Naive thymus-derived CD4-positive, alpha-beta T cell (primary cell): ENCODE measurements at regions of chr2 and their contacts with region 1.

Region 1: DNA sequence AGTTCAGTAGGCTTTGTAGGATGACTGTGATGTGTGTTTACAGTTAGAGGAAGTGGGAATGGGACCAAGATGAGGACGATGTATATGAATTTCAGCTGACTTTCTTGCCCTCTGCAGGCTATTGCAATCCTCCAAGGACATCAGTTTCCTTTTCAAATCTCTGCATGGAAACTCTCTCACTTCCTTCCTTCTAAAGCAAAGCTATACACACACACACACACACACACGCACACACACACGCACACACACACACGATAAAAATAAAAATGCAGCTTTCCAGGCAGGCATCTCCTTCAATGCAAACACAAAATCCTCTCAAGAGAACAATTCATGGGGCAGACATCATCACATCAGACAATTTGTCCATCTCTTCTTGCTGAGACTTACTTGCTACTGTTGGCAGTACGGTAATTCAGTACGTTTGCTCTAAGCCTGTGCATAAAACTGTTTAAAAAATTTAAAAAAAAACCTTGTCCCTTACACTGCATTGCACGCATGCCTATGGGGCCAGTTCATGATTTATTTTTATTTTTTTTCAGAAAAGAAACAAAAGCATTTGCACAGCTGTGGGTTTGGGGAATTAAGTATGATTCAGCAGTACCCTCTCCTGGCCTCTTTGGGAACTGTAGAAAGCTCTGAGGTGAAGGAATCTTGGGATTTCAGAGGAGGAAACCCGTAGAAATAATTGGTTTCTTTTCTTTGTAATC is 27.1 kb upstream of the ICOS start:
- DNase-seq: peak in 6 of 9 donors; percentile 42 to 61 (median 53)
- ATAC-seq: peak; percentile 82
- H3K4me3 ChIP-seq: no peak overlapping the region
- H3K4me3 Mint-ChIP-seq: peak overlapping the region in 8 of 10 donors; percentile 26 to 81 (median 64)
- H3K27ac ChIP-seq: no peak overlapping the region
- H3K27ac Mint-ChIP-seq: peak overlapping the region in 6 of 9 donors; percentile 8 to 71 (median 42)
- H3K4me1 ChIP-seq: peaks cover 0 to 7% of the 10 kb centered on the region in 2 donors
- H3K4me1 Mint-ChIP-seq: peaks cover 4 to 25% (median 8%) of the 10 kb centered on the region in 7 donors
- H3K27me3 ChIP-seq: no peaks in the 10 kb centered on the region
- H3K27me3 Mint-ChIP-seq: peaks cover 0 to 10% (median 0%) of the 10 kb centered on the region in 5 donors

Region 2: GRCh38 chr2:203225423-203226039 is 683.9 kb before region 1 on chr2:
- CTCF ChIA-PET with region 1: no interaction called
- POLR2A ChIA-PET with region 1: no interaction called
- intact Hi-C with region 1: loop called (anchors 1 to 10 kb)
- DNase-seq: peak in 6 of 9 donors; percentile 2 to 41 (median 36)
- ATAC-seq: peak; percentile 85
- H3K4me3 ChIP-seq: no peak overlapping the region
- H3K4me3 Mint-ChIP-seq: no peak overlapping the region
- H3K27ac ChIP-seq: no peak overlapping the region
- H3K27ac Mint-ChIP-seq: no peak overlapping the region
- H3K4me1 ChIP-seq: no peaks in the 10 kb centered on the region
- H3K4me1 Mint-ChIP-seq: no peaks in the 10 kb centered on the region
- H3K27me3 ChIP-seq: no peaks in the 10 kb centered on the region
- H3K27me3 Mint-ChIP-seq: no peaks in the 10 kb centered on the region

Region 3: GRCh38 chr2:203656522-203657287 is 252.7 kb before region 1 on chr2:
- CTCF ChIA-PET with region 1: no interaction called
- POLR2A ChIA-PET with region 1: no interaction called
- intact Hi-C with region 1: loop called in 1 of 2 experiments (anchors 5 kb)
- DNase-seq: peak in 4 of 9 donors; percentile 14 to 20 (median 16)
- ATAC-seq: peak; percentile 88
- H3K4me3 ChIP-seq: no peak overlapping the region
- H3K4me3 Mint-ChIP-seq: peak overlapping the region in 7 of 10 donors; percentile 5 to 76 (median 32)
- H3K27ac ChIP-seq: no peak overlapping the region
- H3K27ac Mint-ChIP-seq: peak overlapping the region in 7 of 9 donors; percentile 21 to 84 (median 63)
- H3K4me1 ChIP-seq: peaks cover 0 to 6% of the 10 kb centered on the region in 2 donors
- H3K4me1 Mint-ChIP-seq: peaks cover 30 to 52% (median 41%) of the 10 kb centered on the region in 7 donors
- H3K27me3 ChIP-seq: no peaks in the 10 kb centered on the region
- H3K27me3 Mint-ChIP-seq: no peaks in the 10 kb centered on the region

Region 4: GRCh38 chr2:203840655-203841205 is 68.7 kb before region 1 on chr2:
- CTCF ChIA-PET with region 1: no interaction called
- POLR2A ChIA-PET with region 1: no interaction called
- intact Hi-C with region 1: no loop called
- DNase-seq: no peak
- ATAC-seq: no peak
- H3K4me3 ChIP-seq: no peak overlapping the region
- H3K4me3 Mint-ChIP-seq: no peak overlapping the region
- H3K27ac ChIP-seq: no peak overlapping the region
- H3K27ac Mint-ChIP-seq: peak overlapping the region in 1 of 9 donors; percentile 63
- H3K4me1 ChIP-seq: no peaks in the 10 kb centered on the region
- H3K4me1 Mint-ChIP-seq: peaks cover 0 to 19% (median 0%) of the 10 kb centered on the region in 7 donors
- H3K27me3 ChIP-seq: no peaks in the 10 kb centered on the region
- H3K27me3 Mint-ChIP-seq: no peaks in the 10 kb centered on the region

Region 5: DNA sequence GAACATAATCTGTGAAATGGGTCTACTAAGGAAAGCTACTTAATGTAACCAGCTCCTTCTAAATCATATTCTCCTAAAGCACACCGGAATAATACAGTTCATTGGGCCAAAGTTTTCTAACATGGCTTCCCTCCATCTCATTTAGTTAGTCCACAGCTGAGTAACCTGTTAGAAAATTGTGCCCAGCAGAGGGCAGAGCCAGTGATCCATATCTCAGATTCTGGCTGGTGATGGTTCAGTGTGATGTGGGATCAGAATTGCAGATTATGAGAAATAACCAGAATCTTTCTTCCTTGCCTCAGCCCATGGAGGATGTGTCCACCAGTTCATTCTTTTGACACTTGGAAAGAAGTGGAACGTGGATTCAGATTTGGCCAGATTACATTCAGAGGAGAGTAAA is 51.2 kb before region 1 on chr2:
- CTCF ChIA-PET with region 1: interaction called, 18 read pairs
- POLR2A ChIA-PET with region 1: interaction called, 4 read pairs
- intact Hi-C with region 1: loop called (anchors 1 to 2 kb)
- DNase-seq: peak in 3 of 9 donors; percentile 29 to 39 (median 38)
- ATAC-seq: peak; percentile 65
- H3K4me3 ChIP-seq: no peak overlapping the region
- H3K4me3 Mint-ChIP-seq: no peak overlapping the region
- H3K27ac ChIP-seq: no peak overlapping the region
- H3K27ac Mint-ChIP-seq: peak overlapping the region in 2 of 9 donors; percentile 77 to 87
- H3K4me1 ChIP-seq: peaks cover 3 to 5% of the 10 kb centered on the region in 2 donors
- H3K4me1 Mint-ChIP-seq: peaks cover 30 to 67% (median 48%) of the 10 kb centered on the region in 7 donors
- H3K27me3 ChIP-seq: no peaks in the 10 kb centered on the region
- H3K27me3 Mint-ChIP-seq: no peaks in the 10 kb centered on the region

Region 6: GRCh38 chr2:203989521-203989920 is 80.1 kb after region 1 on chr2:
- CTCF ChIA-PET with region 1: no interaction called
- POLR2A ChIA-PET with region 1: no interaction called
- intact Hi-C with region 1: no loop called
- DNase-seq: peak in 1 of 9 donors; percentile 8
- ATAC-seq: peak; percentile 5
- H3K4me3 ChIP-seq: no peak overlapping the region
- H3K4me3 Mint-ChIP-seq: peak overlapping the region in 5 of 10 donors; percentile 2 to 36 (median 16)
- H3K27ac ChIP-seq: no peak overlapping the region
- H3K27ac Mint-ChIP-seq: peak overlapping the region in 6 of 9 donors; percentile 21 to 62 (median 40)
- H3K4me1 ChIP-seq: peaks cover 7 to 13% of the 10 kb centered on the region in 2 donors
- H3K4me1 Mint-ChIP-seq: peaks cover 0 to 33% (median 26%) of the 10 kb centered on the region in 7 donors
- H3K27me3 ChIP-seq: no peaks in the 10 kb centered on the region
- H3K27me3 Mint-ChIP-seq: no peaks in the 10 kb centered on the region

Region 7: DNA sequence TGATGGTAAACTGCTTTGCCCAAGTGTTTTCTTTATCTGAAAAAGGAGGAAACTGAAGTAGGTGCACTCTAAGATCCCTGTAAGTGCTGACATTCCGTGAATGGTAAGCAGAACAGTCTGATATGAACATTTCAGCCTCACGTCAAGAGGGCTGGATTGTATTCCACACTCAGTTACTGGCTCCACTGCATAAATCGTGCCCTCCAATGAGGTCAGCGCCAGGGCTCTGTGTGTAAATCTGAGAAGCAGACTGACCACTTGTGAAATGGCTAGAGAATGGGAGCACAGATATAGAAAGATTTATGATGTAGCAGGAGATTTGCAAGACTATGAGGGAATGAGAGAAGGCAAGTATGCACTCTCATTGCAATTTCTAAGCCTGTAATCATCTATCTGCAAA is 180.2 kb after region 1 on chr2:
- CTCF ChIA-PET with region 1: no interaction called
- POLR2A ChIA-PET with region 1: no interaction called
- intact Hi-C with region 1: no loop called
- DNase-seq: no peak
- ATAC-seq: no peak
- H3K4me3 ChIP-seq: no peak overlapping the region
- H3K4me3 Mint-ChIP-seq: no peak overlapping the region
- H3K27ac ChIP-seq: no peak overlapping the region
- H3K27ac Mint-ChIP-seq: no peak overlapping the region
- H3K4me1 ChIP-seq: no peaks in the 10 kb centered on the region
- H3K4me1 Mint-ChIP-seq: no peaks in the 10 kb centered on the region
- H3K27me3 ChIP-seq: no peaks in the 10 kb centered on the region
- H3K27me3 Mint-ChIP-seq: peaks cover 0 to 34% (median 2%) of the 10 kb centered on the region in 5 donors